Sciatic nerve (tissue), 2 donors: ENCODE measurements at regions of chr9 and their contacts with region 1.

Region 1: GRCh38 chr9:130045725-130046450 is 2.9 kb upstream of the FNBP1 start:
- DNase-seq: no peak
- ATAC-seq: no peak

Region 2: DNA sequence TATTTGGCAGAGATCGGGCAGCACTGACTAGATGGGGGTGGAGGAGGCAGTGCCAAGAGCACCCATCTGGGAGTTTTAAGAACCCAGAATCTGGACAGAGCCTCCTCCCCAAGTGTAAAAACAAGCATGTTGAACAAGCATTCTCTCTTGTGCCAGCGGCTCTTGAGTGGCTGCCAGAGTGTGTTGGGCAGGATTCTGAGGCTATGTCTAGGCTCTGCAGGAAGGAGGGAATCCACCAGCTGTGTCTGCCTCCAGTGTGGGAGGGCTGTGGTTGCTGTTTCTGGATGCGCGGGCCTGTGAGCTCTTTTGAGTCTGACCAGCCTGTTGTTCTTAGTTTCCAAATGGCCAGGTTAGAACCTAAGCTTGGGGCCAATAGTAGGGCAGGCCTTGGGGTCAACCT is 259.5 kb after region 1 on chr9:
- intact Hi-C with region 1: no loop called
- DNase-seq: no peak
- ATAC-seq: no peak

Region 3: DNA sequence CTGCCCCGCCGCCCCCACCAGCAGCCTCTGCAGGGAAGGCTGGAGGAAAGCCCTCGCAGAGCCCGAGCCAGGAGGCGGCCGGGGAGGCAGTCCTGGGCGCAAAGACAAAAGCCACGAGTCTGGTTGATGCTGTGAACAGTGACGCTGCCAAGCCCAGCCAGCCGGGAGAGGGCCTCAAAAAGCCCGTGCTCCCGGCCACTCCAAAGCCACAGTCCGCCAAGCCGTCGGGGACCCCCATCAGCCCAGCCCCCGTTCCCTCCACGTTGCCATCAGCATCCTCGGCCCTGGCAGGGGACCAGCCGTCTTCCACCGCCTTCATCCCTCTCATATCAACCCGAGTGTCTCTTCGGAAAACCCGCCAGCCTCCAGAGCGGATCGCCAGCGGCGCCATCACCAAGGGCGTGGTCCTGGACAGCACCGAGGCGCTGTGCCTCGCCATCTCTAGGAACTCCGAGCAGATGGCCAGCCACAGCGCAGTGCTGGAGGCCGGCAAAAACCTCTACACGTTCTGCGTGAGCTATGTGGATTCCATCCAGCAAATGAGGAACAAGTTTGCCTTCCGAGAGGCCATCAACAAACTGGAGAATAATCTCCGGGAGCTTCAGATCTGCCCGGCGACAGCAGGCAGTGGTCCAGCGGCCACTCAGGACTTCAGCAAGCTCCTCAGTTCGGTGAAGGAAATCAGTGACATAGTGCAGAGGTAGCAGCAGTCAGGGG is 839.2 kb after region 1 on chr9:
- intact Hi-C with region 1: loop called (anchors 5 kb)
- DNase-seq: no peak
- ATAC-seq: peak; percentile 29